Heart right ventricle (tissue), 16 donors: ENCODE measurements at regions of chr17 and their contacts with region 1.

Region 1: GRCh38 chr17:50487213-50488096 is 8.8 kb downstream of the RSAD1 start:
- DNase-seq: no peak
- ATAC-seq: no peak
- H3K4me3 ChIP-seq: no peak overlapping the region
- H3K27ac ChIP-seq: no peak overlapping the region
- H3K4me1 ChIP-seq: peaks cover 2 to 9% (median 7%) of the 10 kb centered on the region in 9 donors
- H3K27me3 ChIP-seq: no peaks in the 10 kb centered on the region
- CTCF ChIP-seq: no peak

Region 2: DNA sequence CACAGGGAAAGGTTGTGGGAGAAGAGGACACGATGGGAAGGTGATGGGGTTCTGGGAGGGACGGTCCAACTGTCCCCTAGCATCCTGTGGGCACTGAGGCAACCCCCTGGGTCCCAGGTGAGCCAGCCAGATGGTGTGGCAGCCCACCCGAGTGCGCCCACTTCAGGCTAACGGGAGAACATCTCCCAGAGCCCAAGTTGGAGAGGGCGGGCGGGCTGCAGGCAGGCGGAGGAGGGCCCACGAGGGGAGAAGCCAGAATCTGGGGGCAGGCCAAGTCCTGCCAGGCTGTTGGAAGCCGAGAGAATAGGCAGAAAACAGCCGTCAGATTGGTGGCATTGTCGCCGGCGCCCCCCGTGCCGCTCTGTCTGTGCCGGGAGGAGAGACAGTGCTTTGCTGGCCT is 133.4 kb after region 1 on chr17:
- intact Hi-C with region 1: loop called in 8 of 10 experiments (anchors 5 to 10 kb)
- DNase-seq: no peak
- ATAC-seq: no peak
- H3K4me3 ChIP-seq: no peak overlapping the region
- H3K27ac ChIP-seq: no peak overlapping the region
- H3K4me1 ChIP-seq: peaks cover 0 to 21% (median under 1%) of the 10 kb centered on the region in 9 donors
- H3K27me3 ChIP-seq: peaks cover 0 to 25% (median 6%) of the 10 kb centered on the region in 7 donors
- CTCF ChIP-seq: no peak